Posterior vena cava (tissue), 2 donors: ENCODE measurements at regions of chr5 and their contacts with region 1.

Region 1: GRCh38 chr5:140575309-140575708 is 10.7 kb downstream of the SLC35A4 start:
- DNase-seq: peak; percentile 89

Region 2: DNA sequence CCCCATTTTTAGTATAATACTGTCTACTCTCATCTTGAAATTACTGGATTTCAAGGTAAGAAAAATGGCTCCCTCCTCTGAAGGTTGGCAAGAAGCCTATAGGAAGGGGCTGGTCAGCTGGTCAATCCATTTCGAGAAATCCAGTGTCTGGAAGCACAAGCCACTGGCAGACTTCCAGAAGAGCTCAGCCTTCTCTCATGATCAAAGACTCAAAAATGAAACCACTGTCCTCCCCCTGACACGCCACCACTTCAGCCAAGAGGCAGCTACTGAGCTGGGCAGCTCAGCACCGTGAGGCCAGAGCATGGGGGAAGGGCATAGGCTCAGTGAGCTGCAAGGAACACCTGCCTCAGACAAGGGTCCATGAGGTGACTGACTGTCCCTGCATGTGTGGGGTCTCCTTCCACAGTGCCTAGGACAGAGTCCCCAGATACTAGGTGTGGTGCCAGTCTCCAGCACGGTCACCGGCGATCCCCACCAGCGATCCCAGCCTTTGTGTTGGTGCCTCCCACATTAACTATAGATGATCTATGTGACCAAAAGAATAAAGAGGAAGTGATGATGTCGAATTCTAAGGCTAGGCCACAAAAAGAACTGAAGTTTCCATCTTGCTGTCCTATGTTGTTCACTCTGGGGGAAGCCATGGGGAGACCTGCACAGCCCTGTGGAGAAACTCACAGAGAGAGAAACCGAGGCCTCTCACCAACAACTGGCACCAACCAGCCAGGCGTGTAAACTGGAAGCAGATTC is 1600.0 kb before region 1 on chr5:
- intact Hi-C with region 1: no loop called
- DNase-seq: peak; percentile 81

Region 3: DNA sequence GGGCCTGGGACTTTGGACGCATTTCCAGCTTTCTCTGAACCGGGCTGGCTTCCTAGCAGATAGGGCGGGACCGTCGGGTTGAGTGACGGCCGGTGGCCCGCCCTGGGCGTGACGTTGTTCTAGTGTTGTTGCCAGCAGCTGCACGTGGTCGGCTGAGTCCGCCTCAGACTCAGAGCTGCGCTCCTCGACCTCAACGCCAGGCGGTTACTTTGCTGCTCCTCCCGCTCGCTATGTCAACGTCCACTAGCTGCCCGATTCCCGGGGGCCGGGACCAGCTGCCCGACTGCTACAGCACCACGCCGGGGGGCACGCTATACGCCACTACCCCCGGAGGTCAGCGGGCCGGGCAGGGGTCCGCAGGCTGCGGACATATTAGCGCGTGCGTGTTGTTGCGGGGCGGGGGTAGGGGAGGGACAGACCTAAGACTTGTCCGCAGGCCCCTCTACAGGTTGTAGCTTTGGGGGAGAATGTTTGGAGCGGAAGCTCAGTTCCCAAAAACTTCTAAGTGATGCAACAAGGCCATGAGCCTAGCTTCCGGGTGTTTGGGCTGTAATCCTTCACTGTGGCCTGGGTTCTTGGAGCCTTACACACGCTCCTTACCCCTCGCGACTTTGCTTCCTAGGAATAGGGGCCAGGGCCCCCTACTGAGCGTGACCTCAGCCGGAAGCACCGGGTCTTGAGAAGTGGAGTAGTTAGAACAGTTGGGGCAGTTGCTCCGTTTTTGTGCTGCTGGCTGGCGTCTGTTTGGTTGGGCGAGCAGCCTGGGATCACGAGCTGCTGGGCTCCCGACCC is 27.6 kb before region 1 on chr5 and contains the start of gene EIF4EBP3:
- intact Hi-C with region 1: no loop called
- DNase-seq: peak; percentile 99
- total RNA-seq, gene EIF4EBP3: 8.5 to 11.0 TPM

Region 4: GRCh38 chr5:141757402-141757801 is 1182.1 kb after region 1 on chr5:
- intact Hi-C with region 1: loop called in 1 of 2 experiments (anchors 5 kb)
- DNase-seq: no peak